Prostate gland (tissue), 2 donors: ENCODE measurements at regions of chr22 and their contacts with region 1.

Region 1: GRCh38 chr22:26374391-26375026 is 54.6 kb upstream of the ASPHD2 start:
- DNase-seq: no peak
- H3K4me3 ChIP-seq: no peak overlapping the region
- H3K27ac ChIP-seq: no peak overlapping the region
- H3K4me1 ChIP-seq: no peaks in the 10 kb centered on the region
- H3K27me3 ChIP-seq: no peaks in the 10 kb centered on the region
- CTCF ChIP-seq: no peak
- POLR2A ChIP-seq: no peak

Region 2: DNA sequence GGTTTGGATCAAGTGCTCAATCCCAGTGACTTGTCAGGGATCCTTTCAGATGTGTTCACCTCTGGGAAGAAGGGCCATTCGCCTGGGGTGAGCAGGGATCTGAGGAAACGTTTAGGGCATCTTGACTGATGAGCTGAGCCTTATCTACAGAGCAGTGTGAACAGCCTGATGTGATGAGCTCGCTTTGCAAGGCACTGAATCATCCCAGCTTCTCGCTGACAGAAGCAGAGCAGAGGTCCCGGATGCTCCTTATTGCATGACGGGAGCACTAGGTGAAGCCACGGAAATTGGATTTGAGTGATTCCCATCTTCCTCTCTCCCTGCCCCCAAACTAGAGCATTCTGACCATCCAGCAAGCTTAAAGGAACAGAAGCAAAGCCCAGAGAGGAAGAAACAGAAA is 158.8 kb before region 1 on chr22:
- intact Hi-C with region 1: no loop called
- DNase-seq: no peak
- H3K4me3 ChIP-seq: no peak overlapping the region
- H3K27ac ChIP-seq: no peak overlapping the region
- H3K4me1 ChIP-seq: no peaks in the 10 kb centered on the region
- H3K27me3 ChIP-seq: no peaks in the 10 kb centered on the region
- CTCF ChIP-seq: no peak
- POLR2A ChIP-seq: no peak

Region 3: DNA sequence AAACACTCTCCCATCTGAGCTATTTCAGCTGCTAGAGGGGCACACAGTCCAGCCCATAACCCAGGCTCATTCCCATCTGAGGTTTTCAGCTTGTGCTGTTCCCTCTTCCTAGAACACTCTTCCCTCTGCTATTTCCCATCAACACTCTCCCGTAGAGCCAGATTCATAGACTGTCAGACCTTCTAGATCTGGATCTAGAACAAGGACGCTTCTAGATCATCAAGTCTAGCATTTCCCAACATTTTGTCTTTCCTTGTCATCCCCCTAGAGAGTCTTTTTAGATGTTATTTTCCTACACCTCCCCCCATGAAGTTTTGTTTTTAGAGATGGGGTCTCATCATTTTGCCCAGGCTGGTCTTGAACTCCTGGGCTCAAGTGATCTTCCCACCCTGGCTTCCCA is 260.6 kb after region 1 on chr22:
- intact Hi-C with region 1: loop called (anchors 5 kb)
- DNase-seq: no peak
- H3K4me3 ChIP-seq: no peak overlapping the region
- H3K27ac ChIP-seq: no peak overlapping the region
- H3K4me1 ChIP-seq: no peaks in the 10 kb centered on the region
- H3K27me3 ChIP-seq: no peaks in the 10 kb centered on the region
- CTCF ChIP-seq: no peak
- POLR2A ChIP-seq: no peak